B cell (primary cell): ENCODE measurements at regions of chrX and their contacts with region 1.

Region 1: DNA sequence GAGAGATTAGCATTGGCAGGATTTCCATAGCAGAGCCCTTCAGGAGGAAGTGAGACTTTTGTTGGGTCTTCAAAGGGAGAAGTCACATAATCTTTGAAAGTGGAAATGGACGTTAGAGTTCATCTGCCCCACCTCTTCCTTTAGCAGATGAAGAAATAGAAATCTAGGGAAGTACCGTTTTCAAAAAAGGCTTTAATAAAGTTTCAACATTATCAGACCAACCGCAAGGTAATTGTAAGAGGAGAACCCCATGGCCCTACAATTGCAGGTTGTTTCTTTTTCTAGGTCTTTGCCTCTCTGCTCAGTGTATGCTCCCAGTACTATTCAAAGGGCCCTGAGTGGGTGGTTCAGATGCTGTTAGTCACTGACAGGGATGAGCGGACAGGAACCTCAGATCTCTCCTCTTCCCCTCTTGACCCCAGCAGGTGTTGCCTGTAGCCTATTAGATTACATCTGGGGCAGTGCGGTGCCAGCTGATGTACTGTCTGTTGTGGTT is 48.6 kb upstream of the AP1S2 start:
- DNase-seq: peak; percentile 76
- ATAC-seq: peak; percentile 83
- H3K4me3 ChIP-seq: peak overlapping the region in 3 of 5 experiments; percentile 10 to 50 (median 42)
- H3K4me3 Mint-ChIP-seq: peak overlapping the region; percentile 71
- H3K27ac ChIP-seq: peak overlapping the region; percentile 76 to 88
- H3K27ac Mint-ChIP-seq: peak overlapping the region; percentile 94
- H3K4me1 ChIP-seq: peaks cover 26% of the 10 kb centered on the region in 2 donors
- H3K4me1 Mint-ChIP-seq: peaks cover 22% of the 10 kb centered on the region
- H3K27me3 ChIP-seq: no peaks in the 10 kb centered on the region
- H3K27me3 Mint-ChIP-seq: no peaks in the 10 kb centered on the region
- CTCF ChIP-seq: no peak

Region 2: DNA sequence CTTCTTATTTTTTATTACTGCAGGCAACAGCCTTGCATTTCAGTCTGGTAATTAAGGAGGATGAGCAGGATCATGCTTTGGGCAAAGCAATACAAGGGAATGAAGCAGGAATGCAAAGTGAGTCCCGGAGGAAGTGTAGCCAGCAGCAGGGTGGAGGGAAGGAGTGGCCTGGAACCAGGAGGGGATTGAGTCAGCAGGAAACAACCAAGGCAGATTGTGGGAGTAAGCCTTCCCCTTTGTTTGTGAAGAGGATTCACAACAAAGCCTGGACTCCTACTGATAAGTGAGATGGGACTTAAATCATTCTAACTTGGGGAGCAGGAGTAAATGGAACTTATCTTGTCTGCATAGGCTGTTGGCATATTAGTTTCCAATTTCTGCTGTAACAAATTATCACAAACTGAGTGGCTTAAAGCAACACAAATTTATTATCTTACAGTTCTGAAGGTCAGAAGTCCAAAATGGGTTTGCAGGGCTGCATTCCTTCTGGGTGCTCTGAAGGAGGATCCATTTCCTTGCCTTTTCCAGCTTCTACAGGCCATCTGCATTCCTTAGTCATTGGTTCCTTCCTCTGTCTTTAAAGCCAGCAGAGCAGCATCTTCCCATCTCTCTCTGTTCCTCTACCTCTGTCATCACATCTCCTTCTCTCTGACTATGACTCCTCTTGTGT is 44.5 kb after region 1 on chrX:
- CTCF ChIA-PET with region 1: no interaction called
- POLR2A ChIA-PET with region 1: no interaction called
- intact Hi-C with region 1: no loop called
- DNase-seq: no peak
- ATAC-seq: no peak
- H3K4me3 ChIP-seq: no peak overlapping the region
- H3K4me3 Mint-ChIP-seq: no peak overlapping the region
- H3K27ac ChIP-seq: no peak overlapping the region
- H3K27ac Mint-ChIP-seq: no peak overlapping the region
- H3K4me1 ChIP-seq: no peaks in the 10 kb centered on the region
- H3K4me1 Mint-ChIP-seq: peaks cover 3% of the 10 kb centered on the region
- H3K27me3 ChIP-seq: no peaks in the 10 kb centered on the region
- H3K27me3 Mint-ChIP-seq: no peaks in the 10 kb centered on the region
- CTCF ChIP-seq: no peak

Region 3: DNA sequence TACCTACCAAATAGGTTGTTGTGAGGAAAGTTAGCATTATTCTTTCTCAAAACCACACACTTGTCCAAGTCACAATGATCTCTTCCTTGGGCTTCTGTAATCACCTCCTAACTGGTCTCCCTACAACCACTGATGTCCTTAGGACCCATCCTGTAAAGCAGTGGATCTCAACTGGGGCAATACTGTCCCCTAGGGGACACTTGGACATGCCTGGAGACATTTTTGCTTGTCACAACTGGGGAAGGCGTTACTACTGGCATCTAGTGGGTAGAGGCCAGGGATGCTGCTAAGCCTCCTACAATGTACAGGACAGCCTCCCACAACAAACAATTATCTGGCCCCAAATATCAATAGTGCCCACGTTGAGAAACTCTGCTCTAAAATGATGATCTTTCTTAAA is 70.1 kb after region 1 on chrX:
- CTCF ChIA-PET with region 1: no interaction called
- POLR2A ChIA-PET with region 1: no interaction called
- intact Hi-C with region 1: loop called (anchors 10 kb)
- DNase-seq: peak; percentile 59
- ATAC-seq: peak; percentile 75
- H3K4me3 ChIP-seq: no peak overlapping the region
- H3K4me3 Mint-ChIP-seq: no peak overlapping the region
- H3K27ac ChIP-seq: no peak overlapping the region
- H3K27ac Mint-ChIP-seq: no peak overlapping the region
- H3K4me1 ChIP-seq: peaks cover 3 to 15% of the 10 kb centered on the region in 2 donors
- H3K4me1 Mint-ChIP-seq: peaks cover 22% of the 10 kb centered on the region
- H3K27me3 ChIP-seq: no peaks in the 10 kb centered on the region
- H3K27me3 Mint-ChIP-seq: no peaks in the 10 kb centered on the region
- CTCF ChIP-seq: peak; percentile 42